Adrenal gland (tissue), 19 donors: ENCODE measurements at regions of chr15 and their contacts with region 1.

Region 1: DNA sequence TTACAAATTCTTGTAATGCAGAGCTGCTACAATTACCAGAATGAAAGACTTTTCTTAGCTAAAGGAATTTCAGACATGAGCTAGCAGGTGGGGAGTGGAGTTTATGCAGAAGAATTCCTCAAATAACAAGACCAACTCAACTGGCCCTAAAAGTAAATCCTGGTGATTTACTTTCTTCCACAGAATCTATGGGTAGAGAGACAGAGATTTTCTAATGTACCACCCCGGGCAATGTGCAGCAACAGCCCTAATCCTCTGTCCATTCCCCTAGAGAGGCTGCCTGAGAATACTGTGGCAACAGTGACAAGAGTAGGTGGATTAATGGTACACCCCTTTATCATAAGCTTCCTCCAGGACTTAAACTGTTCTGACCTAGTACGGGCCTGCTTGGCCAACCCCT is 55.2 kb downstream of the AQR start:
- DNase-seq: no peak
- H3K4me3 ChIP-seq: no peak overlapping the region
- H3K27ac ChIP-seq: no peak overlapping the region
- H3K4me1 ChIP-seq: no peaks in the 10 kb centered on the region
- H3K27me3 ChIP-seq: no peaks in the 10 kb centered on the region
- CTCF ChIP-seq: no peak
- POLR2A ChIP-seq: no peak

Region 2: DNA sequence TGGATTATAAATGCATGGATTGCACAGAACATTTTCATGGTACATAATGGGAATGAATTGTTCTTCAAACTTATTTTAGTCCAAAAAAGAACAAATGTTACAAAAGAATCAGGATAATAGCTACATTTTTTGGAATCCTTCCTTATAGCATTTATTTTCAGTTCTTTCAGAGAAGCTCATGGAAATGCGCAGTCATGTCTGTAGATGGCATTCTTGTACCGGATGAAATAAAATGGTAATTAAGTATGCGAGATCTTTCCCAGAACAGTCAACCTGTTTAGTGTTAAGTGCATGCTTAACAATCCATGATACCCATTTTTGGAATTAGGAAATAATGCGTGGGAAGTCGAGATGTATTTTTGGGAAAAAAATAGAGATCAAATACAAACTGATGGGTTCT is 292.6 kb before region 1 on chr15:
- intact Hi-C with region 1: loop called in 1 of 2 experiments (anchors 10 kb)
- DNase-seq: no peak
- H3K4me3 ChIP-seq: no peak overlapping the region
- H3K27ac ChIP-seq: no peak overlapping the region
- H3K4me1 ChIP-seq: no peaks in the 10 kb centered on the region
- H3K27me3 ChIP-seq: peaks cover 7% of the 10 kb centered on the region
- CTCF ChIP-seq: peak in 3 of 6 experiments; percentile 16 to 29 (median 24)
- POLR2A ChIP-seq: no peak